GM10248 (cell line): ENCODE measurements at regions of chr13 and their contacts with region 1.

Region 1: GRCh38 chr13:30371649-30372265 is 50.5 kb upstream of the UBE2L5 start:
- DNase-seq: peak; percentile 70
- CTCF ChIP-seq: no peak

Region 2: DNA sequence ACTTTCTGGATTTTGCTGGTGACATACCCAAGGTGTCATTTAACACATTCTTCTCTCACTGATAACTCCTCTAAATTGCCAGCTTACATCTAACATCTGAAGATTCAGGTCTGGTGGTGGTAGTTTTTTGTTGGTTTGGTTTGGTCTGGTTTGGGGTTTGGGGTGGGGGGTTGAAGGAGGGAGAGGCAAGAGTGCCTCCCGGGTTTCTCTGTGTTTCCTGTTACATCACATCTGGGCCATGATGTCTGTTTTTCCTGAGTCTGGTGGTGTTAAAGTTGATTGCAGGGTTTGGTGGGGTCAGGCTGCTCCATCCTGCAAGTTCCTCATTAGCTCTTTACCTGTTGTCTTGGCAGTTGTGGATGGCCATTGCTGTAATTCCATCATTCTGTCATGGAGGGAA is 365.5 kb before region 1 on chr13:
- CTCF ChIA-PET with region 1: no interaction called
- POLR2A ChIA-PET with region 1: no interaction called
- DNase-seq: no peak
- CTCF ChIP-seq: no peak

Region 3: GRCh38 chr13:30329009-30329585 is 42.7 kb before region 1 on chr13:
- CTCF ChIA-PET with region 1: no interaction called
- POLR2A ChIA-PET with region 1: no interaction called
- DNase-seq: no peak
- CTCF ChIP-seq: no peak

Region 4: DNA sequence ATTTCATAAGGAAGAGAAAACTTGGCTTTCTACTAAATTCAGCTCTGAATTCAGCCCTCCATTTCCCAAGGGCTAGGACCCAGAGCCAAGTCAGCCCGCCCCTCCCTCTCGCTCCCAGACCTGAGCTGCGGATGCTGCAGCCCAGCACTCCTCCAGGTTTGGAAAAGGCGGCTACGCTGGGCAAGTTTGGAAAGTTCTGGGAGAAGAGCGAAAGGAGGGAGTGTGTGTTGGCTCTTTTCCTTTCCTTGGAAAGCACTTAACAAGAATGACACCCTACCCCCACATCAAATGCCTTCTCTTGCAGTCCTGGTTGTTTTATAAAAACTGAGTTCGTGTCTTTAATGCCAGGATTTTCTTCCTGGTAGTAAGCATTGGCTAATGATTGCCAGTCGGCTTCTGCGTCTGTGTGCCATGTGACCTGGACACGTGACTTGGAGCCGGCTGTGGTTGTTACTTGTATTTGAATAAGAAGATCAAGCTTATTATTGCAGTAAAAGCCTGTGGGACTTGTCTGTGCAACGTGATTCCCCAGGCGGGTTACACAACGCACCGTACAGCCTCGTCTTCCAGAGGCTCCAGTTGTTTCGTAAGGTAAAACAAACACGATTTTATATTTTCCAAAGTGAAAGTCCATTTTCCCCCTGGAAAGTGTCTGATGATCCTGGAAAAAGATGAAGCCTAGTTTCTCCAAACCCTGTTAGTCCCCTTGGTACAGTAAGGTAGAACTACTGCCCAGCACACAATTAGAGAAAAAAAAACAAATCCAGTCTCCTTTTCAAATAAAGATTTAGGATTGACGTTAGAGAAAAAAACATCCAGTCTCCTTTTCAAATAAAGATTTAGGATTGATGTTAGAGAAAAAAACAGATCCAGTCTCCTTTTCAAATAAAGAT is 23.7 kb after region 1 on chr13:
- CTCF ChIA-PET with region 1: interaction called, 25 read pairs
- POLR2A ChIA-PET with region 1: no interaction called
- DNase-seq: peak; percentile 68
- CTCF ChIP-seq: no peak

Region 5: DNA sequence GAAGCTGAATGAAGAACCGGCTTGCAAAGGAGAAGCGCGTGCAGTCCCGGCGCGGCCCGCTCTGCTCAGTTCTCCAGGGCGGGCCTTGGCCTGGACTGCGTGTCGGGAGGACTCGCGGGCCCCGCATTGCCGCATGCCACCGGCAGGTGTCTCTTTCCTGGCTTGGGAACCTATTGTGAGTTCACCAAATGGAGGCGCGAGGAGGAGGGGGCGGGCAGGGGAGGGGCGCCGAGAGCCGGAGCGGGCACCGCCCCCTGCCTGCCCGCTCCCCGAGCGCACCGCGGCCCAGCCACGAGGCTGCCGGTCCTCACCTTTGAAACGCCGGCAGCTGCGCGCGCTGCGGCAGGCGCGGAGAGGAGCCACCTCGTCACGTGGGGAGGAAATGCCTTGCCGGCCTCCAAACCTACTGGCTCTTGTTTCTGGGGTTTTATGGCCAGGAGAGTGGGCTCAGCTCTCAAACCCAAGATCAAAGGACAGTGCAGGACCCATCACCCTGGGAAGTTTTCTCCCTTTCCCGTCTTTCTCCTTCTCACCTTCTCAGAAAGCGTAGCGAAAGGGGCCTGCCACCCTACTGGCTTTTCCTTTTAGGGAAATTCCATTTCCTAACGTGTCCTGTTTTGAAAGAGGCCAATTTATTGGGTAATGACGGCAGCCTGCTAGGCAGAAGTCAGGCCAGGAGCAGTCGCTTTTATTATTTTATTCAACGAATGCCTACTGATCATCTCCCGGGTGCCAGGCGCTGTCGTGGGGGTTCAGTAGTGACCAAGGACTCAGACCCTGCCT is 36.8 kb after region 1 on chr13:
- CTCF ChIA-PET with region 1: interaction called, 12 read pairs
- POLR2A ChIA-PET with region 1: interaction called, 3 read pairs
- DNase-seq: peak; percentile 92
- CTCF ChIP-seq: peak; percentile 82